ENCODE measurements at regions of chr17 and their contacts with region 1.

Region 1: DNA sequence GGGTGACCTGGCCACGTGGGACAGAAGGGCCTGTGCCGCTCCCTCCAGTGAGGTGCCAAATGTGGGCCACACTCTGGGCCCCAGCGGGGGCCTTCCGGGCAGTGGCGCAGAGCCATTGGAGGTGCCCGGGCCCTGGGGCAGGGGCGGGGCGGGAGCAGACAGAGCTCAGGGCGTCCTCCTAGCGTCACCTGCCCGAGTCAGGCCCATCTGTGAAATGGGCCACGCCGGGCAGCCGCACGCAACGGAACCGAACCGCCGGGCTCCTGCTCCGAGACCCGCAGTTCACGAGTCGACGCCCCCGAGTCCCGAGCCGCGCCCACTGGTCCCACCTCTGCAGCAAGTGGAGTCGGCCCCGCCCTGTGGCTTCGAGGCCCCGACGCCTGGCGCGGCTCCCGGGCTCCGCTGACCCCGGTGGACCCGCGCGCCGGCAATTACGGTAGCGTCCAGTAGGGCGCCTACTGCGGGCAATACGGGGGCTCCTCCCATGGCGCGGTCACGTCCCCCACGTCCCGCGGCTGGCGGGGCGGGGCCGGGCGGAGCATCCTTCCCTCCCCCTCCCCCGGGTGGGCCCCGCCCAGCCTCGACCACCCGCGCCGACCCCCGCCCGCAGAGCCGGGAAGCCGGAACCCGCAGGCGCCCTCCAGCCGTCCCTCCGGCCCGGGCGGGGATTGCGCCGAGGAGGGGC is 1.9 kb downstream of the SLC16A3 start:
- DNase-seq: peak; percentile 90 to 95 (median 91)
- ATAC-seq: peak; percentile 57 to 78 (median 74)
- H3K4me3 ChIP-seq: peak overlapping the region; percentile 32 to 93 (median 72)
- H3K27ac ChIP-seq: peak overlapping the region; percentile 85 to 99 (median 93)
- H3K4me1 ChIP-seq: peaks cover 0 to 69% (median 37%) of the 10 kb centered on the region in 12 donors
- H3K27me3 ChIP-seq: peaks cover 0 to 6% (median 0%) of the 10 kb centered on the region in 9 donors
- CTCF ChIP-seq: peak; percentile 37 to 79 (median 62)
- POLR2A ChIP-seq: peak in 1 of 2 donors; percentile 29

Region 2: DNA sequence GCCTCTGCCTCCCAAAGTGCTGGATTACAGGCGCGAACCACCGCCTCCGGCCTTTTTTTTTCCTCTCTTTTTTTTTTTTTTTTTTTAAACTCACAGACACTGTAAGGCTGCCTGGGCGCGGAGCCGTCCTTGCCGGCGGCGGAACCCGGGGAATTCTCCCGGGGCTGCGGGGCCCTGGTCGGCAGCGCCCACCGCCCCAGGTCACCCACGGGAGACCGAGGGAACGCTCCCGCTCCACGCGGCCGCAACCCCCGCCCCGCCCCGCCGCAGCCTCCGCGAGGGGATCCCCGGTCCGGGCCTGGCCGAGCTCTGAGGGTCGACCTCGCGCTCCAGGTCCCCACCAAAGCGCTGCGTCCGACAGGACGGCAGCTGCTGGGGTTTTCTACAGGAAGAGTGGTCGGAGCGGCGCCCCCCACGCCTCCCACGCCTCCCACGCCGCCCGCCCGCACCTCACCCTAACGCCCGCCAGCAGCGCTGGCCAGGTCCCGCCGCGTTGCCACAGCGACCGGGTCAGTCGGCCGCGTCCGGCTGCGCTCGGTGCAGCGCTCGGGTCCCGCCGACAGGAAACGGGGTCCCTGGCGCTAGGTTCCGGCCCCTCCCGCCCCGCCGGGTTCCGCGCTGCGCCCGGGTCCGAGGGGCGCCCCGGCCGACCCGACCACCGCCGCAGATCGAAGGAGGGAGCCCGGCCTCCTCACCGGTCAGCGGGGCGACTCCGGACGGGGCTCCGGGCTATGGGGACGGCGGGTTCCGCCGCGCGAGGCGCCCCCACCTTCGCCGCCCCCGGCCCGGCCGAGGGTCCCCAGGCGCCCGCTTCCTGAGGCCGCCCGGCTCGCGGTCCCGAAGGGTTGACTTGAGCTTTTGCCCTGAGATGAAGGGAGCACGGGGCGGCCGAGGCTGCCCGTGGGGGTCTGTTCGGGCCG is 18.2 kb before region 1 on chr17 and contains the start of gene CCDC57:
- intact Hi-C with region 1: loop called in 2 of 10 experiments (anchors 2 kb)
- DNase-seq: peak; percentile 83 to 92 (median 86)
- ATAC-seq: peak; percentile 39 to 86 (median 70)
- H3K4me3 ChIP-seq: peak within 1 kb of the TSS; percentile 84 to 99 (median 92)
- H3K27ac ChIP-seq: peak within 1 kb of the TSS; percentile 51 to 90 (median 84)
- H3K4me1 ChIP-seq: peaks cover 0 to 46% (median 27%) of the 10 kb centered on the region in 12 donors
- H3K27me3 ChIP-seq: no peaks in the 10 kb centered on the region
- CTCF ChIP-seq: peak in 3 of 12 donors; percentile 3 to 8 (median 5)
- POLR2A ChIP-seq: peak in 1 of 2 donors; percentile 66
- total RNA-seq, gene CCDC57: 4.3 to 17.6 (median 10.7) TPM

Region 3: GRCh38 chr17:82292251-82293154 is 61.7 kb after region 1 on chr17:
- intact Hi-C with region 1: loop called in 4 of 10 experiments (anchors 5 to 10 kb)
- DNase-seq: peak; percentile 97 to 99 (median 97)
- ATAC-seq: peak; percentile 94 to 97 (median 95)
- H3K4me3 ChIP-seq: peak overlapping the region; percentile 68 to 98 (median 76)
- H3K27ac ChIP-seq: peak overlapping the region; percentile 91 to 99 (median 95)
- H3K4me1 ChIP-seq: peaks cover 7 to 55% (median 34%) of the 10 kb centered on the region in 12 donors
- H3K27me3 ChIP-seq: no peaks in the 10 kb centered on the region
- CTCF ChIP-seq: no peak
- POLR2A ChIP-seq: peak; percentile 90 to 97

Region 4: GRCh38 chr17:82434216-82434565 is 203.4 kb after region 1 on chr17:
- intact Hi-C with region 1: no loop called
- DNase-seq: no peak
- ATAC-seq: no peak
- H3K4me3 ChIP-seq: no peak overlapping the region
- H3K27ac ChIP-seq: peak overlapping the region in 1 of 12 donors; percentile 12
- H3K4me1 ChIP-seq: peaks cover 0 to 11% (median 0%) of the 10 kb centered on the region in 12 donors
- H3K27me3 ChIP-seq: no peaks in the 10 kb centered on the region
- CTCF ChIP-seq: no peak
- POLR2A ChIP-seq: no peak